ENCODE measurements at regions of chrX and their contacts with region 1.

Region 1: GRCh38 chrX:13506574-13506973 is 62.8 kb upstream of the EGFL6 start:
- DNase-seq: peak; percentile 59
- CTCF ChIP-seq: peak; percentile 42

Region 2: GRCh38 chrX:13646154-13646549 is 139.6 kb after region 1 on chrX:
- CTCF ChIA-PET with region 1: interaction called, 54 read pairs
- POLR2A ChIA-PET with region 1: no interaction called
- DNase-seq: peak; percentile 30
- CTCF ChIP-seq: peak; percentile 50